A549 (cell line): ENCODE measurements at regions of chr7 and their contacts with region 1.

Region 1: GRCh38 chr7:100803398-100804233 is 23.7 kb downstream of the EPHB4 start:
- DNase-seq: peak; percentile 76 to 78
- ATAC-seq: peak; percentile 35 to 74; a peak in 4 of 6 replicates
- H3K4me3 ChIP-seq: no peak overlapping the region
- H3K27ac ChIP-seq: peak overlapping the region; percentile 83 to 95
- H3K4me1 ChIP-seq: peaks cover 53% of the 10 kb centered on the region
- CTCF ChIP-seq: no peak
- EP300 ChIP-seq: no peak
- POLR2A ChIP-seq: no peak
- RAD21 ChIP-seq: no peak

Region 2: DNA sequence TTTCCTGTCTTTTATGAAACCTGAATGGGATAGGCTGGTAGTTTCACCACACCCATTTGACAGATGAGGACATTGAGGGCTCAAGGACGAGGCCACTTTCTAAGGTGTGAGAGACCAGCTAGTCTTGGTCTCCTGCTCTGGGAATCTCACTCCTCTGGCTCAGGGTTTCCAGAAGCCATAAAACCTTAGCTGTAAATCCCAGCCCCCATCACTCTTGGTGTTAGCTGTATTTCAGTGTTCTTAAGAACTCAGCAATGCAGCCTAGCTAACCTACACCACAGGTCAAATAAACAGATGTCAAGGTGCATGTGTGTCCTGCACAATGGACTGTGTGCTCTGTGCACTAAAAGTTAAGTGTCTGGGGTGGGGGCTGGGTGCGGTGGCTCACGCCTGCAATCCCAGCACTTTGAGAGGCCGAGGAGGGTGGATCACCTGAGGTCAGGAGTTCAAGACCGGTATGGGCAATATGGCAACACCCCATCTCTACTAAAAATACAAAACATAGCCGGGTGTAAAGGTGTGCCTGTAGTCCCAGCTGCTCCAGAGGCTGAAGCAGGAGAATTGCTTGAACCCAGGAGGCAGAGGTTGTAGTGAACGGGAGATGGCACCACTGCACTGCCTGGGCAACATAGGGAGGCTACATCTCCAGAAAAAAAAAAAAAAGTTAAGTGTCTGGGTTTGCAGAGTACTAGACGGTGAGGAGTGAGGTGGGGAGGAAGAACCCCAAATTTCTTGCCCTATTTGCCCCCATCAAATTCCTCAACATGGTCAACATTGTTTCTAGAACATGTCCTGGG is 83.9 kb before region 1 on chr7:
- CTCF ChIA-PET with region 1: interaction called, 24 read pairs
- POLR2A ChIA-PET with region 1: no interaction called
- DNase-seq: peak in 1 of 2 experiments; percentile 64
- ATAC-seq: peak; percentile 68 to 80
- H3K4me3 ChIP-seq: peak overlapping the region; percentile 40
- H3K27ac ChIP-seq: peak overlapping the region in 1 of 2 experiments; percentile 70; a peak in 1 of 6 replicates
- H3K4me1 ChIP-seq: peaks cover 11% of the 10 kb centered on the region; the same call in 2 of the 3 replicates
- CTCF ChIP-seq: peak; percentile 55
- EP300 ChIP-seq: no peak
- POLR2A ChIP-seq: no peak
- RAD21 ChIP-seq: peak; percentile 77 to 80

Region 3: DNA sequence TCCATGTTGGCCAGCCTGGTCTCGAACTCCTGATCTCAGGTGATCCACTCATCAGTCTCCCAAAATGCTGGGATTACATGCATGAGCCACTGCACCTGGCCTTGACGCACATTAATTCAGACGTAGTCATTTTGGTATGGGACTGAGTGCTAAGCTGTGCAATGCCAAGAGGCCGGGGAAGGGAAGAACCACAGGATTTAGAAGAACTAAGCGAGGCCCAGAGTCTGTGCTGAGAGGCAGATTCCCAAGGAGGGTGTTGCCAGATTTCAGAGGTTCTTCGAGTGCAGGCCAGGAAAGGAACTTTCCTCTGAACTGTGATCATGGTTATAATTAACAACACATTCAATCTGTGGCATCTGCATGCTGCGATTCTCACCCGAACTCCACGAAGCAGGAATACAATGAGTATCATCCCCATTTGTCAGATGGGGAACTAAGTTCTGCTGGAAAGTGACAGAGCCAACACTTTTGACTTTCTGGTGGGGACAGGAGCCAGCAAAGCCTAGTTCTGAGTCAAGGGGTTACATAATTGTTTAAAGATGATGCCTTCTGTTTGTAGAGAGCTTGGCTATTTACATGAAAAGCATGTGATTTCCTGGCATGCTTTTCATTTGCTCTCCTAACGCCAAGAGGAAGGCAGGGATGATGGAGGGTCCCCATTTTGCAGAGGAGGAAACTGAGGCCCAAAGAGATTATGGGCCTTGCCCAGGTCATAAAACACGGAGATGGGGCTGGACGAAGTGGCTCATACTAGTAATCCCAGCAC is 76.4 kb before region 1 on chr7:
- CTCF ChIA-PET with region 1: interaction called, 24 read pairs
- POLR2A ChIA-PET with region 1: no interaction called
- DNase-seq: no peak
- ATAC-seq: no peak
- H3K4me3 ChIP-seq: no peak overlapping the region
- H3K27ac ChIP-seq: no peak overlapping the region
- H3K4me1 ChIP-seq: peaks cover 23% of the 10 kb centered on the region
- CTCF ChIP-seq: no peak
- EP300 ChIP-seq: no peak
- POLR2A ChIP-seq: no peak
- RAD21 ChIP-seq: no peak

Region 4: GRCh38 chr7:100819551-100819950 is 15.9 kb after region 1 on chr7:
- CTCF ChIA-PET with region 1: interaction called, 317 read pairs
- POLR2A ChIA-PET with region 1: interaction called, 3 read pairs
- DNase-seq: no peak
- ATAC-seq: no peak
- H3K4me3 ChIP-seq: no peak overlapping the region
- H3K27ac ChIP-seq: no peak overlapping the region
- H3K4me1 ChIP-seq: peaks cover 3% of the 10 kb centered on the region; the same call in 1 of the 3 replicates
- CTCF ChIP-seq: no peak
- EP300 ChIP-seq: no peak
- POLR2A ChIP-seq: no peak
- RAD21 ChIP-seq: no peak

Region 5: GRCh38 chr7:100827330-100828227 is 24.0 kb after region 1 on chr7 and contains the start of gene EPHB4:
- CTCF ChIA-PET with region 1: interaction called, 317 read pairs
- POLR2A ChIA-PET with region 1: interaction called, 26 read pairs
- DNase-seq: peak; percentile 73 to 91
- ATAC-seq: peak; percentile 84 to 92
- H3K4me3 ChIP-seq: peak within 1 kb of the TSS; percentile 100
- H3K27ac ChIP-seq: peak within 1 kb of the TSS; percentile 99
- H3K4me1 ChIP-seq: peaks cover 30% of the 10 kb centered on the region; the same call in 2 of the 3 replicates
- CTCF ChIP-seq: peak; percentile 64
- EP300 ChIP-seq: no peak
- POLR2A ChIP-seq: peak; percentile 75
- RAD21 ChIP-seq: peak; percentile 41 to 51
- polyA plus RNA-seq, gene EPHB4: 37.8 and 40.5 TPM in 2 replicates

Region 6: DNA sequence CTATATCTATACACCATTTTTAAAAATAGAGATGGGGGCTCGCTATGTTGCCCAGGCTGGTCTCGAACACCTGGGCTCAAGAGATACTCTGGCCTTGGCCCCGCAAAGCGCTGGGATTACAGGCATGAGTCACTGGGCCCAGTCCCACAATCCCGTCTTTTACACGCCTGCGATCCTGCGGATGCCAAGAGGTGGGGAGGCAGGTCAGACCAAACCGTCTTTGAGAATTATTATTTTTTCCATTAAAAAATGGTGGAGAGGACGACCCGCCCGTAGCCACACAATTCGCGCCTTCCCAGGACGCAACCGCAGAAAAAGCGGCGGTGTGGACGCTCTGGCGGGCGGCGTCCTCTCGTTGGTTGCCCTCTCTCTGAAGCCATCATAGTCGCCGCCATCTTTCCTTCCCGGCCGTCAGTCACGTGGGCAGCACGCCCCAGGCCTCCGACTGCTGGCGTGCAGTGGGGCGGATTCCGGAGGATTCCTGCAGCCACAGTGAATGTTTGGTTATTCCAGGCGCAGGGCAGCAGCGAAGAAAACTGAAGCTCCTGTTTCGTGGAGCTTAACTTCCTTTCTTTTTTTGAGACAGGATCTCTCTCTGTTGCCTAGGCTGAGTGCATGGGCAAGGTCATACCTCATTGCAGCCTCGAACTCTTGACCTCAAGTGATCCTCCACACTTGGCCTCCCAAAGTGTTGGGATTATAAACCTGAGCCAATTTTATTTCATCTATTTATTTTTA is 33.7 kb after region 1 on chr7:
- CTCF ChIA-PET with region 1: interaction called, 317 read pairs
- POLR2A ChIA-PET with region 1: interaction called, 3 read pairs
- DNase-seq: peak; percentile 81 to 93
- ATAC-seq: peak; percentile 95 to 99
- H3K4me3 ChIP-seq: peak overlapping the region; percentile 45
- H3K27ac ChIP-seq: peak overlapping the region; percentile 85 to 89
- H3K4me1 ChIP-seq: peaks cover 14% of the 10 kb centered on the region
- CTCF ChIP-seq: no peak
- EP300 ChIP-seq: no peak
- POLR2A ChIP-seq: peak; percentile 50
- RAD21 ChIP-seq: no peak; a peak in 1 of 5 replicates

Region 7: DNA sequence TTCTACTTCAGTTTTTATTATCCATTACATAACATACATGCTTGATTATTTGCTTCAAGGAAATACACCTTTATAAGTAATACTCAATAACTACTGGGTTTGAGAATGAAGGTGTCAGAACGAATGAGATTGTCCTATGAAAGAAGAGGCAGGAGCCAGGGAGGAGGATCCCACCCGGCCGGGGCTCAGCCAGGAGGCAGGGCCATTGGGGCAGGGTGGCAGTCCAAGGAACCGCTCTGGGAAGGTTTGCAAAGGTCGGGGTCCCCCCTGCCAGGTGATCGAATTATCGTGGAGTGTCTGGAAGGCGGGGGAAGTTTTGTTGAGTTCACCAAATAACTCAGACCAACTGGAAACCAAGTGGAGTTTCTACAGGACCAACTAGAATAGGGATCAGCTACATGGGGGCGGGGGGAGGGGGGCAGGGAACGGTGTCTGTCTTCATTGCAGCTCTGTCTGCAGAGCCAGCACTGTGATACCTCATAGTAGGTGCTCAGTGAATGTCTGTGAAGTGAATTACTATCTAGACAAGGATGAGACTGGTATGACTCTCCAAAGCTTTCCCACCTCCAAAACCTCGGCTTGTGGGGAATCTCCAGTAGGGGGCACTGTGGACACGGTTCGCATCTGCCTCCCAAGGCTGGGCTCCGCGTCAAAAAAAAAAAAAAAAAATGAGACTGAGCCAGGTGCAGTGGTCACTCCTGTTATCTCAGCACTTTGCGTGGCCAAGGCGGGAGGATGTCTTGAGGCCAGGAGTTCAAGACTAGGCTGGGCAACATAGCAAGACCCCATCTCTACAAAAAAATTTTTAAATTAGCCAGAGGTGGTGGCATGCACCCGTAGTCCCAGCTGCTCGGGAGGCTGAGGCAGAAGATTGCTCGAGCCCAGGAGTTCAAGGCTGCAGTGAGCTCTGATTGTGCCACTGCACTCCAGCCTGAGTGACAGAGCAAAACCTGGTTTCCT is 291.1 kb after region 1 on chr7:
- CTCF ChIA-PET with region 1: no interaction called
- POLR2A ChIA-PET with region 1: no interaction called
- DNase-seq: peak; percentile 60 to 79
- ATAC-seq: peak; percentile 83 to 85
- H3K4me3 ChIP-seq: no peak overlapping the region
- H3K27ac ChIP-seq: peak overlapping the region; percentile 50 to 94
- H3K4me1 ChIP-seq: peaks cover 35% of the 10 kb centered on the region
- CTCF ChIP-seq: peak; percentile 84
- EP300 ChIP-seq: no peak
- POLR2A ChIP-seq: no peak
- RAD21 ChIP-seq: peak; percentile 82 to 86